HCT116 (cell line): ENCODE measurements at regions of chr2 and their contacts with region 1.

Region 1: GRCh38 chr2:175690113-175690837 is 311.8 kb downstream of the LNPK start:
- DNase-seq: peak; percentile 58
- ATAC-seq: peak; percentile 78
- H3K4me3 ChIP-seq: no peak overlapping the region
- H3K27ac ChIP-seq: no peak overlapping the region
- H3K4me1 ChIP-seq: no peaks in the 10 kb centered on the region
- H3K27me3 ChIP-seq: no peaks in the 10 kb centered on the region
- CTCF ChIP-seq: peak; percentile 56 to 80 (median 78)
- POLR2A ChIP-seq: no peak
- RAD21 ChIP-seq: peak; percentile 78

Region 2: DNA sequence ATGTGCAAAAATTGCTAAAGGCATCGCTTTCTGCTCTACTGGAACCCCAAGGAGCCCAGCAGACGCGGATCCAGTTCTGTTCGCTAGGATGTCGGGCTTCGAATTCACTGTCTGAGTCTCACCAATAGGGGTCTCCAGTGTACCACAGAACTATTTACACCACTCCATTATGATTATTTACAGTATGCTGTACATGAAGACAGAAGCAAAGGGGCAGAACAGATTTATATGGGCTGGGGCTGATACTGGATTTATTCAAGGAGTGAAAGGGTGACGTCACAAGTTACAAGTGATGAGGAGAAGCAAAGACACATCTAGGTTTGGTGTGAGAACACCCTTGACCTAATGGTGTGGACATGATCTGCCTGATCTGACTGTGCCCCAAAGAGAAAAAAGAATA is 323.5 kb before region 1 on chr2:
- CTCF ChIA-PET with region 1: interaction called, 6 read pairs
- POLR2A ChIA-PET with region 1: no interaction called
- RAD21 ChIA-PET with region 1: no interaction called
- intact Hi-C with region 1: loop called (anchors 1 kb)
- DNase-seq: peak; percentile 38
- ATAC-seq: peak; percentile 100
- H3K4me3 ChIP-seq: no peak overlapping the region
- H3K27ac ChIP-seq: no peak overlapping the region
- H3K4me1 ChIP-seq: no peaks in the 10 kb centered on the region
- H3K27me3 ChIP-seq: no peaks in the 10 kb centered on the region
- CTCF ChIP-seq: peak; percentile 80 to 90 (median 87)
- POLR2A ChIP-seq: no peak
- RAD21 ChIP-seq: peak; percentile 88